ENCODE measurements at regions of chr6 and their contacts with region 1.

Region 1: GRCh38 chr6:119349323-119350042 is at the start of gene MAN1A1:
- DNase-seq: peak; percentile 66
- ATAC-seq: peak; percentile 94
- H3K4me3 ChIP-seq: peak within 1 kb of the TSS; percentile 98
- H3K27ac ChIP-seq: peak within 1 kb of the TSS; percentile 75
- H3K4me1 ChIP-seq: peaks cover 5% of the 10 kb centered on the region; the same call in 1 of the 2 replicates
- H3K27me3 ChIP-seq: no peaks in the 10 kb centered on the region
- CTCF ChIP-seq: no peak
- POLR2A ChIP-seq: peak; percentile 57; the same call in 1 of the 2 replicates
- RAD21 ChIP-seq: no peak
- total RNA-seq, gene MAN1A1: 5.9 and 11.4 TPM in 2 replicates

Region 2: DNA sequence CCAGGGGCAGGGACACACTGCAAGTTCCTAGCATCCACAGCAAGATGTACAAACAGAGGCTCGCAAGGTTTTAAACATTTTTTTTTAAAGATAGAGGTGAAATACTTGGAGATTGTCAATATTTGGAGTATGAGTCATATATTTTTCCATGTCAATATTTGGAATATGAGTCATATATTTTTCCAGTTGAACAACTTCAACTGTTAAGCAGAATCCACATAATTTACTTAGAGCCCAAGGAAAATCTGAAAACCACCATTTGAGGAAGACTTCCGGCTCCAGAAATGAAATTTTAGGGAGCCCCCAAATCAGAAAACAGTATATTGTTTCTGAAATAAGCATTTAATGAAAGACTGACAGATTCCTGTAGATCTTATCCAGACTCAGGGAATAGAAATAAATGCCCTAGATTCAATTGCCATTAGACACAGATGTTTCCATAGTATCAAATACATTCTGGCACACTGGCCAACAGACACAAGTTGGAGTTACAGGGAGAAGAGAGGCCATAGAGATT is 219.5 kb before region 1 on chr6:
- CTCF ChIA-PET with region 1: interaction called, 3 read pairs
- POLR2A ChIA-PET with region 1: interaction called, 3 read pairs
- dilution Hi-C with region 1: no loop called
- in situ Hi-C with region 1: no loop called
- intact Hi-C with region 1: loop called (anchors 1 kb)
- DNase-seq: peak; percentile 76
- ATAC-seq: peak; percentile 75
- H3K4me3 ChIP-seq: no peak overlapping the region
- H3K27ac ChIP-seq: no peak overlapping the region
- H3K4me1 ChIP-seq: 0 out of 2 replicates have a peak, but pooled peaks cover 3% of the 10 kb centered on the region
- H3K27me3 ChIP-seq: peaks cover 2% of the 10 kb centered on the region; the same call in 1 of the 2 replicates
- CTCF ChIP-seq: no peak
- POLR2A ChIP-seq: no peak
- RAD21 ChIP-seq: no peak

Region 3: DNA sequence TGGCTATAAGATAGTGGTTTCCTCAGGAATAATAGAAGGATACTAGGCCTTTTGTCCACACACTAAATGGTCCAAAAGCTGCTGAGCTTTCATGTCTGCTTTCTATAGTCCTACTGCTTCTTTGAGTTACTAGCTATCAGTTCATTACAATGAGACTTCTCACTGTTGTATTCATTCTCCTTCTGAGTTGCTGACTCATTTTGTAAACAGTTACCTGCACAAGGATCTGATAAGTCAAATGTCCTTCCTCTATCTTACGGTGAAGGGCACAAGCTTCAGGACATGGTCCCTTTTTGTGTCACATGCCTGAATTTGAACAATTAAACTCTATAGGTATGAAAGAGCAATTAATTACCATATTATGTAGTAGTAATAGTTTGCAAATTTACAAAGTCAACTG is 90.5 kb before region 1 on chr6:
- CTCF ChIA-PET with region 1: no interaction called
- POLR2A ChIA-PET with region 1: no interaction called
- dilution Hi-C with region 1: no loop called
- in situ Hi-C with region 1: no loop called
- intact Hi-C with region 1: loop called (anchors 5 kb)
- DNase-seq: no peak
- ATAC-seq: no peak
- H3K4me3 ChIP-seq: no peak overlapping the region
- H3K27ac ChIP-seq: no peak overlapping the region
- H3K4me1 ChIP-seq: peaks cover 2% of the 10 kb centered on the region; the same call in 1 of the 2 replicates
- H3K27me3 ChIP-seq: no peaks in the 10 kb centered on the region
- CTCF ChIP-seq: no peak
- POLR2A ChIP-seq: no peak
- RAD21 ChIP-seq: no peak

Region 4: DNA sequence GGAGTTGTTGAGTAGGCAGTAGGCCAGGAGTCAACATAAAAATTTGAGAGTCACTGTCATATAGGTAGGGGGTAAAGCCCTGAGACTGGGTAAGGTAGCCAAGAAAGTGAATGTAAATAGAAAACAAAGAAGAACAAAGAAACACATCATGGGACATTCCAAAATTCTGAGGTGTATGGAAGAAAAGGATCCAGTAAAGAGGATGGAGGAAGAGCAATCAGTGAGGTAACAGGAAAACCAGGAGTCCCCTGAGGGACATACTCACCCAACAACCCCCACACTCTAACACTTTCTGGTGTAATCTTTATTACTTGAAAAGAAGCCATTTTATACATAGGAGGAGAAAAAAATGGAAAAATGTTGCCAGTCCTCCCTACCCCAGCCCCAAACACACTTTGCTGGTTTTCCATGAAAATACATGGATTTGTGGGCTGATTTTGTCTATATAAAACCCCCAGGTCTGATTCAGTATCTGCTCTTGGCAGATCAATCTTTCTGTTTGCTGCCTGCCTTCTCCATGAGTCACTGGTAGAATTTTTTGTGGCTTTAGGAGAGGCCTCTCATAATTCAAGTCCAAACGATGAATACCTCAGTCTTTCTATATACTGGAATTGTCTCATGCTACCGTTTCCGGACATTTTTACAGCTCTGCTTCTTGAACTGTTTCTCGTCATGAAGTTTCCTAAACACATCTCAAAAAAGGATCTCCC is 271.5 kb after region 1 on chr6:
- CTCF ChIA-PET with region 1: no interaction called
- POLR2A ChIA-PET with region 1: no interaction called
- dilution Hi-C with region 1: no loop called
- in situ Hi-C with region 1: no loop called
- intact Hi-C with region 1: loop called (anchors 5 kb)
- DNase-seq: peak; percentile 88
- ATAC-seq: peak; percentile 94
- H3K4me3 ChIP-seq: no peak overlapping the region
- H3K27ac ChIP-seq: no peak overlapping the region; the same call in 1 of the 2 replicates
- H3K4me1 ChIP-seq: no peaks in the 10 kb centered on the region
- H3K27me3 ChIP-seq: no peaks in the 10 kb centered on the region
- CTCF ChIP-seq: no peak
- POLR2A ChIP-seq: no peak
- RAD21 ChIP-seq: no peak

Region 5: GRCh38 chr6:121032268-121033006 is 1683.0 kb after region 1 on chr6:
- CTCF ChIA-PET with region 1: no interaction called
- POLR2A ChIA-PET with region 1: no interaction called
- dilution Hi-C with region 1: no loop called
- in situ Hi-C with region 1: no loop called
- intact Hi-C with region 1: loop called (anchors 10 kb)
- DNase-seq: no peak
- ATAC-seq: no peak
- H3K4me3 ChIP-seq: no peak overlapping the region
- H3K27ac ChIP-seq: no peak overlapping the region
- H3K4me1 ChIP-seq: no peaks in the 10 kb centered on the region
- H3K27me3 ChIP-seq: no peaks in the 10 kb centered on the region
- CTCF ChIP-seq: no peak
- POLR2A ChIP-seq: no peak
- RAD21 ChIP-seq: no peak

Region 6: GRCh38 chr6:121334299-121335086 is 1985.0 kb after region 1 on chr6 and contains the start of gene TBC1D32:
- CTCF ChIA-PET with region 1: no interaction called
- POLR2A ChIA-PET with region 1: no interaction called
- dilution Hi-C with region 1: no loop called
- in situ Hi-C with region 1: no loop called
- intact Hi-C with region 1: loop called (anchors 10 kb)
- DNase-seq: peak; percentile 88
- ATAC-seq: peak; percentile 99
- H3K4me3 ChIP-seq: peak within 1 kb of the TSS; percentile 71
- H3K27ac ChIP-seq: peak within 1 kb of the TSS; percentile 93
- H3K4me1 ChIP-seq: no peaks in the 10 kb centered on the region
- H3K27me3 ChIP-seq: no peaks in the 10 kb centered on the region
- CTCF ChIP-seq: no peak
- POLR2A ChIP-seq: peak; percentile 88
- RAD21 ChIP-seq: no peak
- total RNA-seq, gene TBC1D32: 7.2 and 9.7 TPM in 2 replicates

Measured in IMR-90 (cell line).